Caco-2 (cell line): ENCODE measurements at regions of chr2 and their contacts with region 1.

Region 1: DNA sequence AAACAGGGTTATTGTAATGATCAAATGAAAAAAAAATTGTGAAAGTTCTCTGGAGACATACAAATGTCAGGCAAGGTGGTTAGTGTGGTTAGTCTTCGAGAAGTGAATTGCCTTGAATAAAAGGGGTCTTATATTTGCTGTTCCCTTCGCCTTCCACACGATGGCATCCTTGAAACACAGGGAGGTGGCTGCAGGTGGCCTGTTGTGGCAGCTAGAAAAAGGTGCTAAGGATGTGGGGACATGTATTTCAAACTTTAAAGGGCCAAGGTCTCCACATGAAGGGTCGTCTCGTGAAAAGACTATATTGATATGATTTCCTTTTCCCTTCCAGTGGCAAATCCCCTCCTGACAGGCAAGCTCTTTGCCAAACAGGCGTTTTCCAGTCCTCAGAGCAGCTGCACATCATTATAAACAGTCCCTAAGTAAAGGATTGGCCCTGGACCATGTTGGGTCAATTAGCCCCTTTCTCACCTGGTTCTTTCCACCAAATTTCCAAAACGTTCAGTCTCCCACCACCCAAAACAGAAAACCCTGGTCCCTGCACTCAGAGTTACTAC is 68.5 kb downstream of the COPS8 start:
- DNase-seq: peak in 1 of 2 experiments; percentile 45
- H3K4me3 ChIP-seq: no peak overlapping the region
- H3K4me3 Mint-ChIP-seq: no peak overlapping the region
- H3K27ac Mint-ChIP-seq: no peak overlapping the region
- H3K4me1 ChIP-seq: no peaks in the 10 kb centered on the region
- H3K4me1 Mint-ChIP-seq: no peaks in the 10 kb centered on the region
- H3K27me3 ChIP-seq: no peaks in the 10 kb centered on the region
- H3K27me3 Mint-ChIP-seq: no peaks in the 10 kb centered on the region
- CTCF ChIP-seq: peak; percentile 49 to 69

Region 2: GRCh38 chr2:236939721-236940231 is 214.4 kb before region 1 on chr2:
- CTCF ChIA-PET with region 1: no interaction called
- POLR2A ChIA-PET with region 1: no interaction called
- intact Hi-C with region 1: no loop called
- DNase-seq: no peak
- H3K4me3 ChIP-seq: no peak overlapping the region
- H3K4me3 Mint-ChIP-seq: no peak overlapping the region
- H3K27ac Mint-ChIP-seq: no peak overlapping the region
- H3K4me1 ChIP-seq: no peaks in the 10 kb centered on the region
- H3K4me1 Mint-ChIP-seq: no peaks in the 10 kb centered on the region
- H3K27me3 ChIP-seq: no peaks in the 10 kb centered on the region
- H3K27me3 Mint-ChIP-seq: no peaks in the 10 kb centered on the region
- CTCF ChIP-seq: no peak

Region 3: DNA sequence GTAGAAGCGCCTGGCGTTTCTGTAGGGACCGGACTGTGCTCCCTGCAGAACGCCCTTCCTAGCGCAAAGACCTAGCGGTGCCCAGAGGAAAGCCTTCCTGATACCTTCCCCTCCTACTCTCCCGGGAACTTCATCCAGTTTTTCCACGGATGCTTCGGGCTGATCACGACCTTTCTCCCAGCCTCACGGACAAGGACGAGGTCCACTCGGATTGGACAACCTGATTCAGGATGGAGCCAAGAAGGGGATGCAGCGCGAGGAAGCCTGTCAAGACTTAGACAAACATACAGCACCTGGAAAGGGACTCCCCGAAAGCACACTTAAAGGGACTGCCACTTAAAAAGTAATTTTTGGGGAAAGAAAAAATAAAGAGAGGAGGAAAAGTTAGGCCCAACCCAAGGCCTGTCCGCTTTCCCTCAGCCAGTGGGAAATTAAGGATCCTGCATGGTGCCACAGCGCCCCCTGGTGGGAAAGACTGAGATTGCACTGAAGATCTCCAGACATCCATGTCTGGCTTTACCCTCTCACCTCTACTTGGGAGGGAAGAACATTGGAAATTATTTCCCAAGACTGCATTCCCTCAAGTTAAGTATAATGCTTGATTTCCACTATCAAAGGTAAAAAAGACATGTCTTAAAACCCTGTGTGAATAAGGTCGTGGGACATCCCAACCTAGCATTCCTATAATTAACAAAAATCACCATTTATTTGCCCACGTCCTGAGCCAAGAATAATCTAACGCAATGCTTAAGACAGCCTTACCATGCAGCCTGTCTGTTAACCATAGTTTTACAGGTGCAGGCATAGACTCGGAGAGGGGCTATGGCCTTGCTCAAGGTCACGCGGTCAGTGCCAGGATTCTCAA is 81.9 kb before region 1 on chr2:
- CTCF ChIA-PET with region 1: no interaction called
- POLR2A ChIA-PET with region 1: no interaction called
- intact Hi-C with region 1: no loop called
- DNase-seq: peak; percentile 55 to 76
- H3K4me3 ChIP-seq: no peak overlapping the region
- H3K4me3 Mint-ChIP-seq: no peak overlapping the region
- H3K27ac Mint-ChIP-seq: no peak overlapping the region
- H3K4me1 ChIP-seq: peaks cover 11% of the 10 kb centered on the region; the same call in 1 of the 2 replicates
- H3K4me1 Mint-ChIP-seq: peaks cover 8% of the 10 kb centered on the region
- H3K27me3 ChIP-seq: no peaks in the 10 kb centered on the region
- H3K27me3 Mint-ChIP-seq: no peaks in the 10 kb centered on the region
- CTCF ChIP-seq: peak; percentile 79 to 86

Region 4: DNA sequence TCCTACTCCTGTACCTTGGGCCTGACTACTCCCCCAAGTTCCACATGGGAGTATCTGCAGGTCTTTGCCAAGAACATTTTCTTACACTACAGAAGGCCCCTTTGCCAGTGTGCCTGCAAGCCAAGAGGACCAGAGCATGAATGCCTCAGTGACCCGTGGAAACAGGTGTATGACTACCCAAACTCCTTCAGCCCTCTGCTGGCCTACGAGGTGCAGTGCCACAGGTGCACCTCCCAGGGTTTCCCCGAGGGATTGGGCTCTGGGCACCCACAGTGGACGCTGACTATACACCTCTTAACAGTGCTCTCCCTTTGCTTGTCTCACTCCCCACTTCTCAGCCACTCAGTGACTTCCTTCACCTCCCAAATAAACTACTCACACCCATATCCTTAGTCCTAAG is 168.4 kb after region 1 on chr2:
- CTCF ChIA-PET with region 1: no interaction called
- POLR2A ChIA-PET with region 1: no interaction called
- intact Hi-C with region 1: loop called (anchors 5 kb)
- DNase-seq: peak in 1 of 2 experiments; percentile 30
- H3K4me3 ChIP-seq: no peak overlapping the region
- H3K4me3 Mint-ChIP-seq: no peak overlapping the region
- H3K27ac Mint-ChIP-seq: no peak overlapping the region
- H3K4me1 ChIP-seq: no peaks in the 10 kb centered on the region
- H3K4me1 Mint-ChIP-seq: no peaks in the 10 kb centered on the region
- H3K27me3 ChIP-seq: no peaks in the 10 kb centered on the region
- H3K27me3 Mint-ChIP-seq: no peaks in the 10 kb centered on the region
- CTCF ChIP-seq: peak in 1 of 2 experiments; percentile 53

Region 5: GRCh38 chr2:237413777-237414661 is 259.9 kb after region 1 on chr2 and contains the start of gene COL6A3:
- CTCF ChIA-PET with region 1: no interaction called
- POLR2A ChIA-PET with region 1: no interaction called
- intact Hi-C with region 1: loop called (anchors 5 kb)
- DNase-seq: no peak
- H3K4me3 ChIP-seq: no peak within 1 kb of the TSS
- H3K4me3 Mint-ChIP-seq: no peak within 1 kb of the TSS
- H3K27ac Mint-ChIP-seq: no peak within 1 kb of the TSS
- H3K4me1 ChIP-seq: no peaks in the 10 kb centered on the region
- H3K4me1 Mint-ChIP-seq: no peaks in the 10 kb centered on the region
- H3K27me3 ChIP-seq: no peaks in the 10 kb centered on the region
- H3K27me3 Mint-ChIP-seq: peaks cover 11% of the 10 kb centered on the region
- CTCF ChIP-seq: no peak
- total RNA-seq, gene COL6A3: 0.73 and 2.1 TPM in 2 replicates